ENCODE measurements at regions of chr16 and their contacts with region 1.

Region 1: DNA sequence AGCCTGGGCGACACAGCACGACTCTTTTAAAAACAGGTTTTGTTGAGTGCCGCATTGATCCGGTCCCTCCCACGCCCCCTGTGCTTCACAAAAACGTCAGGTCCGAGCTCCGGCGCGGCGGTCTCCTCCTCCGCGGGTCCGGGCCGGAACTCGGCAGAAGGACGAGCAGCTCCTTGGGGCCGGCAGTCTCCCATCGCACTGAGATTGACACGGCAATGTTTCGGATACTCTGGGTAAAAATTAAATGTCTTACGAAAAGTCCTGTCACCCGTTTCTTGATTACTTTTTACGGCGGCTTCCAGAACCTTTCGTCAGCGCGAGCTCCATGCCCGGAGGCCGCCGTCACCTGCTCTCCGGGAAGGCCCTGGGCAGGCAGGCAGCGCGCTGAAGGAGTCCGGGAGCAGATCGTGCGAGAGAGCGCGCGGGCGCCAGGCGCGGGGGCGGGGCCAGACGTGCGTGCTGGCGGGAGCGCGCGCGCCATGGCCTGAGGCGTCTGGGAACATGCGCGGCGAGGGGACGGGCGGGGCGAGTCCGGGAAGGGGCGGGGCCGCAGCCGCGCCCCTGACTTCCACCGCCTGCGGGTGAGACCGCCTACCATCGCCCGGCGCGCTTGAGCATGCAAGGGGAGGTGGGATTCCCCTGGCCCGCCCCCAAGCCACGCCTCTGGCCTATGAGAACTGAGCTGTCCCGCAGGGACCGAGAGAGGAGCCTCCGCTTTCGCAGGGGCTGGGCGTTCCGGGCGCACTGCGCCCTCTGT is 11.7 kb upstream of the SRL start:
- DNase-seq: peak; percentile 100
- H3K4me3 Mint-ChIP-seq: peak overlapping the region; percentile 94
- H3K27ac Mint-ChIP-seq: peak overlapping the region; percentile 99
- H3K4me1 Mint-ChIP-seq: peaks cover 12% of the 10 kb centered on the region
- H3K27me3 Mint-ChIP-seq: no peaks in the 10 kb centered on the region

Region 2: DNA sequence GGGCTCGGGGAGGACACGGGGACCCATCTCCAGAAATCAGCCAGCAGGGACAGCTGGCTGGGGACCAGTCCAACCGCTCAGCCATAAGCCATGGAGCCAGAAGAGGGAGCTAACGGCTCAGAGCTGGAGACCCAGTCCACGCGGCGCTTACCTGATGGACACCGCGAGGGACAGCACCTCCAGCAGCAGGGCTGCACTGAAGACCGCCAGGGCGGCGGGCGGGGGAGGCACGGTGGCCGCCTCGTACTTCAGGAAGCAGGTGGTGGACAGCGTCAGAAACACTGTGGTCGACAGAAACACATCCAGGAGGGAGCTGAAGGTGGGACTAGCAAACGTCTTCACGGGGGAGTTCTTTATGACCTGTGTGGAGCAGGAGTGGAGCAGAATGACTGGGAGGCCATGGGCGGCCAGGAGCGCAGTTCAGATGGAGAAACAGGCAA is 270.5 kb before region 1 on chr16:
- CTCF ChIA-PET with region 1: interaction called, 13 read pairs
- POLR2A ChIA-PET with region 1: no interaction called
- DNase-seq: peak; percentile 53
- H3K4me3 Mint-ChIP-seq: no peak overlapping the region
- H3K27ac Mint-ChIP-seq: peak overlapping the region; percentile 16
- H3K4me1 Mint-ChIP-seq: peaks cover 6% of the 10 kb centered on the region
- H3K27me3 Mint-ChIP-seq: no peaks in the 10 kb centered on the region

Region 3: GRCh38 chr16:4169415-4169814 is 84.2 kb before region 1 on chr16:
- CTCF ChIA-PET with region 1: no interaction called
- POLR2A ChIA-PET with region 1: no interaction called
- DNase-seq: no peak
- H3K4me3 Mint-ChIP-seq: no peak overlapping the region
- H3K27ac Mint-ChIP-seq: no peak overlapping the region
- H3K4me1 Mint-ChIP-seq: peaks cover 9% of the 10 kb centered on the region
- H3K27me3 Mint-ChIP-seq: no peaks in the 10 kb centered on the region

Region 4: GRCh38 chr16:4232541-4233386 is 20.8 kb before region 1 on chr16:
- CTCF ChIA-PET with region 1: interaction called, 10 read pairs
- POLR2A ChIA-PET with region 1: no interaction called
- DNase-seq: no peak
- H3K4me3 Mint-ChIP-seq: no peak overlapping the region
- H3K27ac Mint-ChIP-seq: no peak overlapping the region
- H3K4me1 Mint-ChIP-seq: no peaks in the 10 kb centered on the region
- H3K27me3 Mint-ChIP-seq: peaks cover 2% of the 10 kb centered on the region

Region 5: DNA sequence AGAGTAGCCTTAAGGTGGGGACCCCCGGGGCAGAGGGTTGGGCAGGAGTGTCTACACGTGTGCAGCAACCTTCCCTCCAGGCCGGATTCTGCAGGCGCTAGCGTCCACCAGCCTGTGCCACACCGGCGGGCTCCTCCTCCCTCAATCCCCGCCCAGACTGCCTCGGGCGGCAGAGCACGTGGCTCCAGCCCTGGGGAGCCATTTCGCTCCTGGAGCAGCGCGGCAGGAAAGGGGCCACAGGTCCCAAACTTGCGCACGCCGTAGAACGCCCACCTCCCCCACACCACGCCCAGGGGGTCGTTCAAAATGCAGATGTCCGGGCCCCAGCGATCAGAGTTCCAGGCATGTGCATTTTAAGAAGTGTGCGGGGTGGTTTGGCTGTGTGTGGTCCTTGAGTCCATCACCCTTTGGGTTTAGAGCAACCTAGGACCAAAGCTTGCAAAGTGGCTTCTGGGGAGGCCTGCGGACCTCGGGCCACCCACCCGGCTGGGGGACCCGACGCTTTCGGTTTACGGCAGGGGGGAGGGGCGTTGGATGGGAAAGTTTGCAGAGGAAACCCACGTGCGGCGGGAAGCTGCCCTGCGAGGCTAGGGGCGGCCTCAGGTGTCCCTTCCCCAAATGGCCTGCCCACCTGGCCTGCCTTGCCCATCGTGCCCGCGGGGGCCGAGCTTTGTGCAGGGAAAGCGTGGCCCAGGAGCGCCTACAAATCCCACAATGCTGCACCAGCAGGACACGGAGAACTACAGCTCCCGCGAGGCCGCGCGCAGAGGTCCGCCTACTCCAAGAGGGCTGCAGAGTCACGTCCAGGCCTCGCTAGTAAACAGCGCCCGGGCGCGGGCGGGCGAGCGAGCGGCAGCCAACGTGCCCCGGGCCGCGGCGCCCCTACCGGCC is 17.8 kb after region 1 on chr16:
- CTCF ChIA-PET with region 1: interaction called, 124 read pairs
- POLR2A ChIA-PET with region 1: no interaction called
- DNase-seq: peak; percentile 93
- H3K4me3 Mint-ChIP-seq: peak overlapping the region; percentile 86
- H3K27ac Mint-ChIP-seq: peak overlapping the region; percentile 95
- H3K4me1 Mint-ChIP-seq: peaks cover 21% of the 10 kb centered on the region
- H3K27me3 Mint-ChIP-seq: no peaks in the 10 kb centered on the region

Measured in activated CD4-positive, alpha-beta T cell treated with anti-CD3 and anti-CD28 coated beads, Interleukin-2, amount 10 ng/mL, durations not matched to agents 7 days and 5 days (primary cell).